Activated CD8-positive, alpha-beta T cell treated with anti-CD3 and anti-CD28 coated beads for 36 hours (primary cell): ENCODE measurements at regions of chr17 and their contacts with region 1.

Region 1: DNA sequence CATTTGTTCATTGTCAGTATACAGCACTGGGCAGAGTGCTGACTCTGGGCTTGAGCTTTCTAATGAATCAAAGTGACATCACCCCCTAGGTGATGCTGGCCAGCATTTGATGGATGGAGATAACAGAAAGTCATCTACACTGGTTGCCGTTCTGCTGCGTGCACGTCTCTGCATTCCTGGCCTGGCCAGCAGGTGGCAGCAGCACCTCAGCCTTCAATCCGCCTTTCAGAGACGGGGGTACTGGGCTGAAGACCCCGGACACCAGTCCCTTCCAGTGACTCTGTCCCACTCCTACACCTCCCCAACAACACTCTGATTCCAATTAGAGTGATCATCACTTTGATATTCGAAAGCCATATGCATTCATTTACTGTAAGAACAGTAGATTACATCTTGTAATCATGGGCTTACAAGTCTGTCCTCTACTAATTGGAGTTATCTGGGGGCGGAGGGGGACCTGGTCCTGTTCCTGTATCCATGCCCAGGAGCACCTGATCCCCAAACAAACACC is 6.0 kb downstream of the CPSF4L start:
- DNase-seq: peak; percentile 73
- ATAC-seq: peak; percentile 87
- H3K4me3 Mint-ChIP-seq: no peak overlapping the region
- H3K27ac Mint-ChIP-seq: no peak overlapping the region
- H3K4me1 Mint-ChIP-seq: peaks cover 4% of the 10 kb centered on the region
- H3K27me3 Mint-ChIP-seq: no peaks in the 10 kb centered on the region
- CTCF ChIP-seq: peak; percentile 99

Region 2: GRCh38 chr17:73231841-73232586 is 23.7 kb before region 1 on chr17:
- CTCF ChIA-PET with region 1: interaction called, 10 read pairs
- POLR2A ChIA-PET with region 1: no interaction called
- intact Hi-C with region 1: no loop called
- DNase-seq: peak; percentile 98
- ATAC-seq: peak; percentile 95
- H3K4me3 Mint-ChIP-seq: peak overlapping the region; percentile 93
- H3K27ac Mint-ChIP-seq: peak overlapping the region; percentile 97
- H3K4me1 Mint-ChIP-seq: peaks cover 58% of the 10 kb centered on the region
- H3K27me3 Mint-ChIP-seq: no peaks in the 10 kb centered on the region
- CTCF ChIP-seq: no peak

Region 3: DNA sequence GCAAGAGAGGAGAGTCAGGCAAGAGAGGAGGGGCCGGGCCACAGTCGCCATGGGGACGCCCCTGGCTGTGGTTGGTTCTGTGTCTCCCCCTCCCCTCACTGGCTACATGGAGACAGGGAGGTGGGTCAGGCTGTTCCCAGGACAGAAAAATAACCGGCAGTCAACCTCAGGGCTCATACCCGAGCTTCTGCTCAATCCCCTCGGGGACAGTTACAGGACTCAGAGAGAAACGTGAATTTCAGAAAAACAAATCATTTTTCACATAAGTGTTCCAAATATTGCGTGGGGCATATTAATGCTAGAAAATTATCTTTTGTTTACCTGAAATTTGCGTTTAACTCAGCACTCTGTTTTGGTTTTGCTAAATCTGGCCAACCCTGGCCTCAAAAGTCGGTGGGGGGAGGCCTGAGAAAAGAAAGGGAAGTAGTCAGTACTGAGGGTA is 28.1 kb after region 1 on chr17:
- CTCF ChIA-PET with region 1: no interaction called
- POLR2A ChIA-PET with region 1: no interaction called
- intact Hi-C with region 1: no loop called
- DNase-seq: no peak
- ATAC-seq: no peak
- H3K4me3 Mint-ChIP-seq: no peak overlapping the region
- H3K27ac Mint-ChIP-seq: no peak overlapping the region
- H3K4me1 Mint-ChIP-seq: no peaks in the 10 kb centered on the region
- H3K27me3 Mint-ChIP-seq: no peaks in the 10 kb centered on the region
- CTCF ChIP-seq: no peak